ENCODE measurements at regions of chr10 and their contacts with region 1.

Region 1: GRCh38 chr10:80260295-80261243 is 28.9 kb downstream of the MAT1A start:
- DNase-seq: peak in 1 of 2 experiments; percentile 86
- H3K4me3 ChIP-seq: no peak overlapping the region
- H3K27ac ChIP-seq: no peak overlapping the region
- H3K4me1 ChIP-seq: peaks cover 0 to 7% (median under 1%) of the 10 kb centered on the region in 4 experiments; a peak in 2 of 7 replicates
- H3K27me3 ChIP-seq: no peaks in the 10 kb centered on the region
- CTCF ChIP-seq: peak; percentile 74 to 86 (median 78)
- EP300 ChIP-seq: no peak
- POLR2A ChIP-seq: no peak
- RAD21 ChIP-seq: peak; percentile 66 to 75

Region 2: DNA sequence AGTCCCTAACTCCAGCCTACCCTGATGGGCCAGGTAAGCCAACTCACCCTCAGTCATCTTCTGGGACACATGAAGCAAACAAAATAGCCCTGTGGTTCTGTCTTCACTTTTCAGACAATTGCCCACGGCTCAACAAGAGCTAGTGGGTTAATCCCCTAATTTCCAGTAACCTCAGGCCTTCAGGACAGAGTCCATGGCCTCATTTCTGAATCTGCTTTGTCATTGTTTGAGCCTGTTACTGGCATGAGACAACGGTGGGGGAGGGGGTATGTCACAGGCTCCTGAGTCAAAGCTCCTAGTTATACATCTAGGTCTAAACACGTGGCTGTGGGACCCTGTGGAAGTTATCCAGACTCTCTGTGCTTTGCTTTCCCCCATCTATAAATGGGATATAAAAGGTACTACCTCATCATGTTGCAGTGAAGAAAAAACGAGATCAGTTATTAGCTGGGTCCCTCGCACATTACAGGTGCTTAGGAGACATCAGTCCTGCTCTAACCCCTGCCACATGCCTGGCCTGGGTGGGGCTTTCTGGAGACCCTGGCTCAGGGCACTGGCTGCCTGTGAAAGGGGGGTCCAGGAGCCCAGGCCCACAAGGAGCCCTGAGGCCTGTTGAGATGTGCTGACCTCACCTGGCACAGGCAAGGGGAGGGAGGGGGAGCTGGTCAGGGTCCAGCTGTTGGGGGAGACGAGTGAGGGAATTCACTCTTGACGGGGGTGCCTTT is 12.4 kb after region 1 on chr10:
- CTCF ChIA-PET with region 1: interaction called, 16 read pairs
- POLR2A ChIA-PET with region 1: no interaction called
- DNase-seq: no peak
- H3K4me3 ChIP-seq: no peak overlapping the region
- H3K27ac ChIP-seq: no peak overlapping the region
- H3K4me1 ChIP-seq: peaks cover 0 to 2% (median 0%) of the 10 kb centered on the region in 4 experiments; a peak in 1 of 7 replicates
- H3K27me3 ChIP-seq: no peaks in the 10 kb centered on the region; a peak in 1 of 7 replicates
- CTCF ChIP-seq: no peak
- EP300 ChIP-seq: no peak
- POLR2A ChIP-seq: no peak
- RAD21 ChIP-seq: no peak

Region 3: DNA sequence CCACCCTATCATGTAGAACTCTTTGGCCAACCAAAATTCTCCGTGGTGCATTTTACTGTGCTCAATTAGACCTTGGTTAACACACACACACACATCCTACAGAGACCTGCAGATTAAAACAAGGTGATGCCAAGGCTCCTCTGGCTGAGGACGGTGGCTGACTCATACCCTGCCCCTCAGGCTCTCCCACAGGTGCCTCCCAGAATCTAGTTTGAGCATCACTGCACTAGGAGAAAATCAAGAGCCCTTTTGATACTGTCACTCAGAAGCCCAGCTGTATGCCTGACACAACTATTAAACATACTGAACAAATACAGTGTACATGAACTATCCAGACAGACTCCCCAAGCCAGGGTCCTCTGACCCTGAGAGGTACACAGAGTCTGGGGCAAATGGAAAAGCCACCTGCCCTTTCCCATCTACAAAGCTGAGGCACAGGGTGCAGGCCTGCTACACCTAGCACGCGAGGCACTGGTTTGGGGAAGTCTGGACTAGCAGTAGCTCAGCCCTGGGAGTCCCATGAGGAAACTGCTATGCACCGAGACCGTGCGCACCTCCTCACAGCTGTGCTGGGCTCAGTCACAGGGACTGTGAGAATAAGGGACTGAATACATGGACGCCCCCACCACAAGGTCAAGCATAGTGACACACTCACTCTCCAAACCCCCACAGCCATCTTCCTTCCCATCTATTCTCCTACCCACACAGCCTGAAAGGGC is 20.6 kb after region 1 on chr10:
- CTCF ChIA-PET with region 1: interaction called, 15 read pairs
- POLR2A ChIA-PET with region 1: no interaction called
- DNase-seq: no peak
- H3K4me3 ChIP-seq: no peak overlapping the region
- H3K27ac ChIP-seq: no peak overlapping the region
- H3K4me1 ChIP-seq: peaks cover 0 to 7% (median 0%) of the 10 kb centered on the region in 4 experiments; a peak in 2 of 7 replicates
- H3K27me3 ChIP-seq: no peaks in the 10 kb centered on the region; a peak in 2 of 7 replicates
- CTCF ChIP-seq: no peak
- EP300 ChIP-seq: no peak
- POLR2A ChIP-seq: no peak
- RAD21 ChIP-seq: no peak

Region 4: DNA sequence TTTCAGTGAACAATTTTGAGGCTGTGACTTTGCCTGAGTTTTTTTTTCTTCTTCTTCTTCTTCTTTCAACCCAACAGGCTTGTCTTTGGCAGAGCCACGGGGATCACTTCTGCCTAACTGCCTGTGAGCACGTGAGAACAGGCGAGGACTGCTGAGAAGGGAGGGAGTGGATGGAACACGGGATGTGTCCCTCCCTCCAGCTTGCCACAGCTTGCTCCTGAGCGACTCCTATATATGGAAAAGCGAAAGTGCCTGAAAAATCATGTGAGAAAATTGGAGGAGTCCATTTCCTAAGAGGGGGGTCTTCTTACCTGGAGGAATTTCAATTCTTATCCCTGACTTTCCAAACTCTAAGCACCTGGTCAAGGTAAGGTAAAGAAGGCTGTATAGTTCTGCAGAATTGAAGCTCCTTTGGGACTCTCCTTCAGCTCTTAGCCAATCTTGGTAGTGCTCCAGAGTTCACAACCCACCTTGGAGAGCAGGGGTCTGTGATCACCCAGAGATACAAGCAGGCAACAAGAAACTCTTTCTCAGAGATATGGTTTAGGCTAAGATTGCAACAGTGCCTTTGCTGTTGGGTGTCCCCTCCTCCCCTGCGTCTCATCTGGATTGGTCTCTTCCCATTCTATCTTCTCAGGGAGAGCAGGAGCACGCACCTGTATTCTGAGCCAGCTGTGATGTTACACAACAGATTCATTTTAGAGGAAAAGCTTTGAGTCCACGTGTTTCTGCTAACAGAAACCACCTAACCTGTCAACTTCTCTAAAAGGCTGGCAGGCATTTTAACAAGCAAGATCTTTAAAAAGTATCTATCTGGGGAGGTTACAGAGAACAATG is 29.1 kb after region 1 on chr10 and contains the start of gene MAT1A:
- CTCF ChIA-PET with region 1: interaction called, 10 read pairs
- POLR2A ChIA-PET with region 1: no interaction called
- DNase-seq: peak in 1 of 2 experiments; percentile 13
- H3K4me3 ChIP-seq: peak within 1 kb of the TSS in 1 of 4 experiments; percentile 28; a peak in 2 of 8 replicates
- H3K27ac ChIP-seq: no peak within 1 kb of the TSS
- H3K4me1 ChIP-seq: peaks cover 0 to 9% (median 2%) of the 10 kb centered on the region in 4 experiments; a peak in 3 of 7 replicates
- H3K27me3 ChIP-seq: no peaks in the 10 kb centered on the region
- CTCF ChIP-seq: peak in 2 of 3 experiments; percentile 49 to 54; a peak in 3 of 4 replicates
- EP300 ChIP-seq: 0 out of 3 replicates have a peak, but pooled peaks of 1 of the 2 experiments have one; percentile 72
- POLR2A ChIP-seq: no peak
- RAD21 ChIP-seq: peak in 1 of 2 experiments; percentile 25; a peak in 1 of 4 replicates
- total RNA-seq, gene MAT1A: 2.9 and 4.1 TPM in 2 replicates

Region 5: GRCh38 chr10:80382989-80383388 is 122.4 kb after region 1 on chr10:
- CTCF ChIA-PET with region 1: interaction called, 10 read pairs
- POLR2A ChIA-PET with region 1: no interaction called
- DNase-seq: peak in 1 of 2 experiments; percentile 49
- H3K4me3 ChIP-seq: no peak overlapping the region
- H3K27ac ChIP-seq: no peak overlapping the region
- H3K4me1 ChIP-seq: no peaks in the 10 kb centered on the region
- H3K27me3 ChIP-seq: no peaks in the 10 kb centered on the region
- CTCF ChIP-seq: peak in 2 of 3 experiments; percentile 58 to 78; a peak in 3 of 4 replicates
- EP300 ChIP-seq: no peak
- POLR2A ChIP-seq: no peak
- RAD21 ChIP-seq: peak; percentile 82 to 83